ENCODE measurements at regions of chr18 and their contacts with region 1.

Region 1: DNA sequence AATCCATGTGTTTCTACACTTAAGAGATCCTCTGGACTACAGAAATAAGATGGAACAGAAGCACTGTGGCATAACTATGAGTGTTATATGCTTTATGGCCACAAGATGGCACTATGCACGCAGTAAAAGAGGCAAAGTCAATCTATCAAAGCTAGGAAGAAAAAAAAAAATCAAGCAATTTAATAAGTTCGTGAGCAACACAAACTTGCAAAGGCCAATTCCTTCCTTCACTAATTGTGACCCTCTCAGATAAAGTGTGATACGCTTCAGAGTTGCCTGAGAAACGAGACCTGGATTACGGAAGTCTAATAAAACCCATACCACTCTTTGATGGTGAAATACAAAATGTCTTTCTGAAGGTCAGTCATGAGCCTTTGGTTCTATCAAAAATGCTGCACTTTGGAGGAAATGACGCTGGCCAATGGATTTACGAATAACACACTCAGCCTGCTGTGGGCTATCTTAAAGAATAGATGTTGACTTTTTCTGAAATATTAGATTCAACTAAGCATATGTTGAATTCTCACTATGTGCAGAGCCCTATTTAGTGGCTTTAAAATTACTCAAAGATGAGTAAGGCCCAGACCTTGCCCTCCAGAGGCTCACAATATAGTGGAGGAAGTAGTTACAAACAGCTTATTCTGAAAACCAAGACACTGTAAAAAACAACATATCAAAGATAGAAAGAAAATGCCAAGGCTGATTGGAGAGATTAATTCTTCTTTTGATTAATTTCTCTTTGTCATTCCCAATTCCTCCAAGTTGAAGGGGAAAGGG is 35.5 kb upstream of the TTR start:
- DNase-seq: peak in 5 of 9 experiments; percentile 17 to 72 (median 32)
- ATAC-seq: no peak
- H3K4me3 ChIP-seq: no peak overlapping the region
- H3K4me3 Mint-ChIP-seq: no peak overlapping the region
- H3K27ac ChIP-seq: no peak overlapping the region
- H3K27ac Mint-ChIP-seq: no peak overlapping the region
- H3K4me1 ChIP-seq: no peaks in the 10 kb centered on the region
- H3K4me1 Mint-ChIP-seq: peaks cover 2% of the 10 kb centered on the region
- H3K27me3 ChIP-seq: no peaks in the 10 kb centered on the region
- H3K27me3 Mint-ChIP-seq: peaks cover 9% of the 10 kb centered on the region
- CTCF ChIP-seq: peak; percentile 82

Region 2: DNA sequence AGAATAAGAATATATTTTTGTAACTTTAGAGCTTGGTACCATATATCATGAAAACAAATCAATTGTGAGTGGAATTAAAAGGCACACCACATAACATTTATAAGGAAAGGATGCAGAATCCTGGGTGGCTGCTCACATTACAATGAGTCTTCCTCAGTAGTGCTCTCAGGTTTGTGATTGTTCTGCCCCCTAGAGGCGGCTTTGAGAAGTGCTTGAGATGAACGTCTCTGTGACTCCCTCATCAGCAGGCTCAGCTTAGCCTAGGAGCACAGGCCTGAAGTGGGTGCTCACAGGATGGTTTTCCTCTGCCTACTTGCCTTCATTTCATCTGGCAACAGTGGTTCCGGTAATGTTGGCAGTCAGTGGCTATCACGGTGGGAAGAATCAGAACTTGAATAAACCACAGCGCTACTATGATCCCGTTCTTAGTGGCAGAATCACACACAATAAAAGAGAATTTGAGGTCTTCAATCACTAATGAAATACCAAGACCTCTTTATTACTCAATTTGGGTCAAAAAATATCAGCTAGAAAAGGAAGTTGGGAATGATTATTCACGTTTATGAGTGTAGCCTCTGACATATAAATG is 166.3 kb after region 1 on chr18:
- CTCF ChIA-PET with region 1: interaction called, 10 read pairs
- POLR2A ChIA-PET with region 1: no interaction called
- intact Hi-C with region 1: loop called (anchors 1 kb)
- DNase-seq: peak; percentile 40 to 78 (median 61)
- ATAC-seq: peak; percentile 64
- H3K4me3 ChIP-seq: no peak overlapping the region
- H3K4me3 Mint-ChIP-seq: no peak overlapping the region
- H3K27ac ChIP-seq: no peak overlapping the region
- H3K27ac Mint-ChIP-seq: no peak overlapping the region
- H3K4me1 ChIP-seq: no peaks in the 10 kb centered on the region
- H3K4me1 Mint-ChIP-seq: peaks cover 6% of the 10 kb centered on the region
- H3K27me3 ChIP-seq: peaks cover 0 to 3% of the 10 kb centered on the region in 2 experiments
- H3K27me3 Mint-ChIP-seq: peaks cover 33% of the 10 kb centered on the region
- CTCF ChIP-seq: peak; percentile 82

Region 3: GRCh38 chr18:31954349-31954748 is 398.2 kb after region 1 on chr18:
- CTCF ChIA-PET with region 1: no interaction called
- POLR2A ChIA-PET with region 1: no interaction called
- intact Hi-C with region 1: loop called in 1 of 2 experiments (anchors 5 kb)
- DNase-seq: no peak
- ATAC-seq: no peak
- H3K4me3 ChIP-seq: no peak overlapping the region
- H3K4me3 Mint-ChIP-seq: no peak overlapping the region
- H3K27ac ChIP-seq: no peak overlapping the region
- H3K27ac Mint-ChIP-seq: no peak overlapping the region
- H3K4me1 ChIP-seq: no peaks in the 10 kb centered on the region
- H3K4me1 Mint-ChIP-seq: no peaks in the 10 kb centered on the region
- H3K27me3 ChIP-seq: no peaks in the 10 kb centered on the region
- H3K27me3 Mint-ChIP-seq: no peaks in the 10 kb centered on the region
- CTCF ChIP-seq: no peak

Region 4: GRCh38 chr18:32167975-32168730 is 612.0 kb after region 1 on chr18:
- CTCF ChIA-PET with region 1: no interaction called
- POLR2A ChIA-PET with region 1: no interaction called
- intact Hi-C with region 1: loop called in 1 of 2 experiments (anchors 10 kb)
- DNase-seq: no peak
- ATAC-seq: no peak
- H3K4me3 ChIP-seq: no peak overlapping the region
- H3K4me3 Mint-ChIP-seq: no peak overlapping the region
- H3K27ac ChIP-seq: no peak overlapping the region
- H3K27ac Mint-ChIP-seq: no peak overlapping the region
- H3K4me1 ChIP-seq: no peaks in the 10 kb centered on the region
- H3K4me1 Mint-ChIP-seq: no peaks in the 10 kb centered on the region
- H3K27me3 ChIP-seq: no peaks in the 10 kb centered on the region
- H3K27me3 Mint-ChIP-seq: peaks cover 2% of the 10 kb centered on the region
- CTCF ChIP-seq: no peak

Measured in CD8-positive, alpha-beta T cell (primary cell).